Right ventricle myocardium inferior (tissue), 1 donor: ENCODE measurements at regions of chr1 and their contacts with region 1.

Region 1: GRCh38 chr1:27772933-27773825 is at the start of gene STX12:
- DNase-seq: peak; percentile 99
- ATAC-seq: peak; percentile 99
- total RNA-seq, gene STX12: 24.4 TPM

Region 2: DNA sequence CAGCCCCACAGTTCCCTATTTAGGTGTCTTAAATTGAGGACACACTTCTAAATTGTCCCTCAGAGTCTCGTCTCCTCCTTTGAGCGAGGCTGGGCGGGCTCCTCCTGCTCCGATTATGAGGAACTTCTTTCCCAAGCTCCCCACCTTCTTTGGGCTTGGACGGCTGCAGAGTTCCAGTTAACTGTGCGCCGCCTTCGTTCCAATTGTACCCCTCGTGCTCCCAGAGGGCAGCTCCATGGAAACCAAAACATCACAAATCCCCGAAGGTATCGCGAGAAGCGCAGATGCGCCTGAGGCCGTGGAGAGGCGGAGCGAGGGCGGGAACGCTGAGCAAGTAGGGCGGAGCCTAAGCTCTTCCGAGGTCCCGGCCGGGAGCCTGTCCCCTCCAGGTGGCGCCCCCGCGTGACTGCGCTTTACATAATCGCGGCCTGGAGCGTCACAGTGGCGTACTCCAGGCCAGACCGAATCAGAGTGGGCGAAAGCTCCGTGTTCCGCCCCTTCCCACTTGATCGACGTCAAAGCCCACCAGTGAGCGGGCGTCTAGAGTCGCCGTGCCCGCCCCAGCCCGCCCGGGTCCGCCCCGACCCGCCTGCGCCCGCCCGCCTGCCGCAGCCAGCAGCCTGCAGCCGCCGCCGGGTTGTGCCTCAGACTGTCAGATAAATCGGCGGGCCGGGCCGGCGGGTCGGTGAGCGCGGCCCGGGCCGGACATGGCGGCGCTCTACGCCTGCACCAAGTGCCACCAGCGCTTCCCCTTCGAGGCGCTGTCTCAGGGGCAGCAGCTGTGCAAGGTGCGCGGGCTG is 47.6 kb before region 1 on chr1 and contains the start of gene FAM76A:
- intact Hi-C with region 1: loop called (anchors 5 kb)
- DNase-seq: peak; percentile 100
- ATAC-seq: peak; percentile 98
- total RNA-seq, gene FAM76A: 10.6 TPM

Region 3: DNA sequence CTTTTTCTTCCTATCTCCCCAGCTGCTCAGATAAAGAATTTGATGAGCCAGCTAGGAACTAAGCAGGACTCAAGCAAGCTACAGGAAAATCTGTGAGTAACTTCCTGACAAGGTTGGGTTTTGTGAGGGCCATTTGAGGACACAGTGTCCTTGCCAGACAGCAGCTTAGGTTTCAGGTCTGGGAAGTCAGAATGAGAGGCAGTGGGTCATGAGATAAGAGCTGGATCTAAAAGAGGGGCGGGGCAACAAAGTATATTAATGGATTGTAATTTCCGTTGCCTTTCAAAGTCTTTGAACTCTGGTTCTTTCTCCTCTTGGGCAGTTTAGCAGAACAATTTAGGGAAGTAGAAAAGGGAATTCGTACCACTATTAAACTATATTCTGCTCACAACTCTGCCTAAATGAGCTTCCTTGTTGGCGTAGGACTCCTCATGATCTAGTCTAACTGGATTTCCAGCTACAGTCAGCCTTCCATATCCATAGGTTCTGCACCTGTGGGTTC is 16.4 kb after region 1 on chr1:
- intact Hi-C with region 1: loop called (anchors 2 kb)
- DNase-seq: no peak
- ATAC-seq: peak; percentile 42

Region 4: DNA sequence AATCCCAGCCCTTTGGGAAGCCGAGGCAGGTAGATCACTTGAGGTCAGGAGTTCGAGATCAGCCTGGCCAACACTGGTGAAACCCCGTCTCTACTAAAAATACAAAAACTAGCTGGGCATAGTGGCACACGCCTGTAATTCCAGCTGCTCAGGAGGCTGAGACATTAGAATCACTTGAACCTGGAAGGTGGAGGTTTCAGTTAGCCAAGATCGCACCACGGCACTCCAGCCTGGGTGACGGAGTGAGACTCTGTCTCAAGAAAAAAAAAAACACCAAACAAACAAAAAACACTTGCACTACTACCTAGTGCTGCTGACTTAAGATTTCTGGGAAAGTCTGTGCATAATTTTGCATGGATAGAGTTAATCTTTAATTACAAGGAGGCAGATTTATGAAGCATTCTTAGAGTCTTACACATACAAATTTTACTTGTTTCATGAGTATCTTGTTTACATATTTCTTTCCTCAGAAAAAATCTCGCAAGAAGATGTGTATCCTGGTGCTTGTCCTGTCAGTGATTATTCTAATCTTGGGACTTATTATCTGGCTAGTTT is 48.7 kb after region 1 on chr1:
- intact Hi-C with region 1: loop called (anchors 10 kb)
- DNase-seq: no peak
- ATAC-seq: no peak

Region 5: GRCh38 chr1:28160782-28161266 is 387.6 kb after region 1 on chr1:
- intact Hi-C with region 1: no loop called
- DNase-seq: no peak
- ATAC-seq: no peak